ENCODE measurements at regions of chr4 and their contacts with region 1.

Region 1: GRCh38 chr4:53908661-53909078 is 155.7 kb downstream of the CHIC2 start:
- DNase-seq: peak; percentile 78
- H3K4me3 Mint-ChIP-seq: no peak overlapping the region
- H3K27ac Mint-ChIP-seq: no peak overlapping the region
- H3K4me1 Mint-ChIP-seq: peaks cover 27% of the 10 kb centered on the region
- H3K27me3 Mint-ChIP-seq: no peaks in the 10 kb centered on the region
- CTCF ChIP-seq: peak; percentile 66

Region 2: GRCh38 chr4:53196882-53197771 is 711.5 kb before region 1 on chr4:
- CTCF ChIA-PET with region 1: interaction called, 4 read pairs
- POLR2A ChIA-PET with region 1: no interaction called
- intact Hi-C with region 1: loop called (anchors 1 kb)
- DNase-seq: peak; percentile 79
- H3K4me3 Mint-ChIP-seq: no peak overlapping the region
- H3K27ac Mint-ChIP-seq: no peak overlapping the region
- H3K4me1 Mint-ChIP-seq: no peaks in the 10 kb centered on the region
- H3K27me3 Mint-ChIP-seq: no peaks in the 10 kb centered on the region
- CTCF ChIP-seq: peak; percentile 78

Region 3: DNA sequence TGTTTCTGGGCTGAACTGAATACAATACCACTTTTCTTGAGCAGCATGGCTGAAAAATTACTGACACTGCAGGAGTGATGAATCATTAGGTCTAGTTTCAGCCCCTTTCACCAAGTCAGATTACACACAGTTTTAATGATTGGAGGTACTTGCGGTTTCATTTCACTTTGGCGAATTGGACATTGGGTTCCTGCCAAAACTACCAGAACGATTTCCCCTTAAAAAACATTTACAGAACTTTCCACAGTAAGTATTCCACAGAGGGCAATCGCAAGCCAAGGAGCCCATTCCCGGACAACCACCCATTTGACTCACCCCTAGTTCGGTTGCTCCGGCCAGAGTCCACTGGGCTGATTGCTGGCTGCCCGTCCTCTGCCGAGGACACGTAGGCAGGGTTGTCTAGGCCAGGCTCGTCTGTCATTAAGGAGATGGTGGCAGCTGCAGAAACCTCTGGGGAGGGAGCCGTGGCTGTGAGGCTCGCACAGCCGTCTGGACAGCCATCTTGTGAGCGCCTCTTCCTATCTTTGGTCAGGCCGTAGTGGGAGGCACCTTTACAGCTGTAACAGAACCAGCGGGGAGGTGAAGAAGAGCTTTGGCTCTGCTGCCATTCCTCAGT is 400.9 kb before region 1 on chr4:
- CTCF ChIA-PET with region 1: interaction called, 3 read pairs
- POLR2A ChIA-PET with region 1: no interaction called
- intact Hi-C with region 1: loop called (anchors 5 kb)
- DNase-seq: peak; percentile 24
- H3K4me3 Mint-ChIP-seq: no peak overlapping the region
- H3K27ac Mint-ChIP-seq: no peak overlapping the region
- H3K4me1 Mint-ChIP-seq: peaks cover 10% of the 10 kb centered on the region
- H3K27me3 Mint-ChIP-seq: no peaks in the 10 kb centered on the region
- CTCF ChIP-seq: no peak

Region 4: GRCh38 chr4:53920116-53920515 is 11.4 kb after region 1 on chr4:
- CTCF ChIA-PET with region 1: interaction called, 84 read pairs
- POLR2A ChIA-PET with region 1: interaction called, 4 read pairs
- intact Hi-C with region 1: no loop called
- DNase-seq: no peak
- H3K4me3 Mint-ChIP-seq: no peak overlapping the region
- H3K27ac Mint-ChIP-seq: no peak overlapping the region
- H3K4me1 Mint-ChIP-seq: peaks cover 45% of the 10 kb centered on the region
- H3K27me3 Mint-ChIP-seq: no peaks in the 10 kb centered on the region
- CTCF ChIP-seq: no peak

Region 5: GRCh38 chr4:53935780-53936179 is 27.1 kb after region 1 on chr4:
- CTCF ChIA-PET with region 1: interaction called, 84 read pairs
- POLR2A ChIA-PET with region 1: no interaction called
- intact Hi-C with region 1: loop called (anchors 1 kb)
- DNase-seq: peak; percentile 76
- H3K4me3 Mint-ChIP-seq: peak overlapping the region; percentile 25
- H3K27ac Mint-ChIP-seq: no peak overlapping the region
- H3K4me1 Mint-ChIP-seq: peaks cover 23% of the 10 kb centered on the region
- H3K27me3 Mint-ChIP-seq: no peaks in the 10 kb centered on the region
- CTCF ChIP-seq: no peak

Region 6: DNA sequence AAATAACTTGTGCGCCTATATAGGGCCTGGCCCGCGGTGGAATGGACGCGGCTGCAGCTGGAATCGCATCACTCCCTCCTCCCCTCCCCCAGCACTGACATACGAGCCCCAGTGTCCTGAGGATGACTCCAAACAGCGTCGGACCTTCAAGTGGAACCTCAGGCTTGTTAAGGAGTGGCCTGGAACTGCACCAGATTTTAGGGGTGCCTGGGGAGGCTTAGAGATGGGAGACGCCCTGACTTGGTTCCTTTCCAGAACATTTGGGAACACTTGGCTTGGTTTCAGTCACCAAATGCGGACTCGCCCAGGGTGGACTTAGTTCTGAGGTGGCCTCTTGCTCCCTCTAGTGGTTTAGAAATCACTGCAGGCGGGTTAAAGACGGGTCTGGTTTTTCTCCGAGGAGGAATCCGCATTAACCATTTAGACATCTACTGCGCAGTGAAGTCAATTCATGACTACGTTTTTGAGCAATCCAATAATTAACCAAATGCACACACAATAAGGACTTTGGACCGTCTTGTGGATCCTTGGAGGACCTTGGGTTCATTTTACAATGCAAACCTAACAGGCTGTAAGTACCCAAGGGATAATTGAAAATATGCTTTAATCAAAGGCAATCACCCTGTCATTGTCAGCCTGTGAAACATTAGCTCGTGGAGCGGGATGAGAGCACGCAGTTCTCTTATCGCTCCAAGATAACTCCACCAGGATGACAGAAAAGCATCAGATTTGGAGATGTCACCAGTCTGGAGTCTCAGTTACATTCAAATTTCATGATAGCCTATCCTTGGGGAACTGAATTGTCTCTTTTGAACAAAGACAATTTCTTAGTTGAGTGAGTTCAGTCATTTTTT is 309.2 kb after region 1 on chr4:
- CTCF ChIA-PET with region 1: interaction called, 154 read pairs
- POLR2A ChIA-PET with region 1: interaction called, 3 read pairs
- intact Hi-C with region 1: loop called (anchors 1 kb)
- DNase-seq: peak; percentile 91
- H3K4me3 Mint-ChIP-seq: peak overlapping the region; percentile 40
- H3K27ac Mint-ChIP-seq: no peak overlapping the region
- H3K4me1 Mint-ChIP-seq: peaks cover 14% of the 10 kb centered on the region
- H3K27me3 Mint-ChIP-seq: no peaks in the 10 kb centered on the region
- CTCF ChIP-seq: peak; percentile 77

Region 7: GRCh38 chr4:54516556-54517215 is 608.0 kb after region 1 on chr4:
- CTCF ChIA-PET with region 1: no interaction called
- POLR2A ChIA-PET with region 1: no interaction called
- intact Hi-C with region 1: no loop called
- DNase-seq: no peak
- H3K4me3 Mint-ChIP-seq: no peak overlapping the region
- H3K27ac Mint-ChIP-seq: no peak overlapping the region
- H3K4me1 Mint-ChIP-seq: peaks cover 18% of the 10 kb centered on the region
- H3K27me3 Mint-ChIP-seq: no peaks in the 10 kb centered on the region
- CTCF ChIP-seq: no peak

Measured in MCF 10A (cell line).